Posterior cingulate gyrus (tissue), 11 donors: ENCODE measurements at regions of chr5 and their contacts with region 1.

Region 1: GRCh38 chr5:126339215-126339805 is 83.9 kb upstream of the GRAMD2B start:
- DNase-seq: peak in 3 of 10 donors; percentile 9 to 42 (median 13)

Region 2: GRCh38 chr5:126600631-126601511 is 261.6 kb after region 1 on chr5 and contains the start of gene PHAX:
- intact Hi-C with region 1: loop called (anchors 5 kb)
- DNase-seq: peak; percentile 70 to 97 (median 78)